ENCODE measurements at regions of chr3 and their contacts with region 1.

Region 1: GRCh38 chr3:33030802-33031201 is 66.1 kb downstream of the GLB1 start:
- DNase-seq: peak; percentile 80
- ATAC-seq: peak; percentile 97
- H3K4me3 Mint-ChIP-seq: peak overlapping the region; percentile 1
- H3K27ac Mint-ChIP-seq: peak overlapping the region; percentile 28
- H3K4me1 Mint-ChIP-seq: peaks cover 27% of the 10 kb centered on the region
- H3K27me3 Mint-ChIP-seq: peaks cover 3% of the 10 kb centered on the region

Region 2: DNA sequence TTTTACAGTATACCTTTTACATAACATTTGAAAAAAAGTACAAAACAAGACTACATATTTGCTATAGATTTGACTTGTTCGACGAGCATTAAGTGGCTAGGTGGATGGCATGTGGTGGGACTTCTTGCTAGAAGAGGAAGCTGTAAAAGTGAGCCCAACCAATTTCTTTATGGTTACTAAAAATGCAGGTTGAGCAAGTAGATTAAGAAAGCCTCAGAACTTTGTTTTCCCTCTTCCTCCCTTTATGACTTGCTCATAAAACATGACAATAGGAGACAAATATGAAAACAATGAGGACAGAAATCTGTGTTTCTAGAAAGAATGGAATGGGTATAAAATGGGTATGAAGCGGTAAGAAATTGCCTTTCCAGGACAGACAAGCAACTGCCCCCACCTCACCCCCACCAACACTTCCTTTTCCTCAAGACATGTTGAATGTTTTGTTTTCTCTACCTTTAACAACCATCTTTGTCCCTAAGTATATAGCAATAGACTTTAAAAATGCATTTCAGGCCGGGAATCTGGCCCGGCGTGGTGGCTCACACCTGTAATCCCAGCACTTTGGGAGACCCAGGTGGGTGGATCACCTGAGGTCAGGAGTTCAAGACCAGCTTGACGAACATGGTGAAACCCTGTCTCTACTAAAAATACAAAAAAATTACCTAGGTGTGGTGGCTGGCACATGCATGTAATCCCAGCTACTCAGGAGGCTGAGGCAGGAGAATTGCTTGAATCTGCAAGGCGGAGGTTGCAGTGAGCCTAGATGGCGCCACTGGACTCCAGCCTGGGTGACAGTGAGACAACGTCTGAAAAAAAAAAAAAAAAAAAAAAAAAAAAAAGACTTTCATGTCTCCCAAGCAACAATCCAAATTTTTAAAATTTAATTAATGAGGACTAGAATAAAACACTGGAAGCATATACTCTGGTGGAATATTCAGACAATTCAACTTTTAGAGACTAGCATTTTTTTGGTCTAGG is 129.1 kb before region 1 on chr3:
- CTCF ChIA-PET with region 1: no interaction called
- POLR2A ChIA-PET with region 1: no interaction called
- DNase-seq: peak; percentile 45
- ATAC-seq: no peak
- H3K4me3 Mint-ChIP-seq: no peak overlapping the region
- H3K27ac Mint-ChIP-seq: no peak overlapping the region
- H3K4me1 Mint-ChIP-seq: peaks cover 9% of the 10 kb centered on the region
- H3K27me3 Mint-ChIP-seq: peaks cover 25% of the 10 kb centered on the region

Region 3: GRCh38 chr3:32947789-32948238 is 83.0 kb before region 1 on chr3:
- CTCF ChIA-PET with region 1: interaction called, 98 read pairs
- POLR2A ChIA-PET with region 1: interaction called, 7 read pairs
- DNase-seq: peak; percentile 94
- ATAC-seq: peak; percentile 90
- H3K4me3 Mint-ChIP-seq: no peak overlapping the region
- H3K27ac Mint-ChIP-seq: no peak overlapping the region
- H3K4me1 Mint-ChIP-seq: peaks cover 35% of the 10 kb centered on the region
- H3K27me3 Mint-ChIP-seq: peaks cover 3% of the 10 kb centered on the region

Region 4: DNA sequence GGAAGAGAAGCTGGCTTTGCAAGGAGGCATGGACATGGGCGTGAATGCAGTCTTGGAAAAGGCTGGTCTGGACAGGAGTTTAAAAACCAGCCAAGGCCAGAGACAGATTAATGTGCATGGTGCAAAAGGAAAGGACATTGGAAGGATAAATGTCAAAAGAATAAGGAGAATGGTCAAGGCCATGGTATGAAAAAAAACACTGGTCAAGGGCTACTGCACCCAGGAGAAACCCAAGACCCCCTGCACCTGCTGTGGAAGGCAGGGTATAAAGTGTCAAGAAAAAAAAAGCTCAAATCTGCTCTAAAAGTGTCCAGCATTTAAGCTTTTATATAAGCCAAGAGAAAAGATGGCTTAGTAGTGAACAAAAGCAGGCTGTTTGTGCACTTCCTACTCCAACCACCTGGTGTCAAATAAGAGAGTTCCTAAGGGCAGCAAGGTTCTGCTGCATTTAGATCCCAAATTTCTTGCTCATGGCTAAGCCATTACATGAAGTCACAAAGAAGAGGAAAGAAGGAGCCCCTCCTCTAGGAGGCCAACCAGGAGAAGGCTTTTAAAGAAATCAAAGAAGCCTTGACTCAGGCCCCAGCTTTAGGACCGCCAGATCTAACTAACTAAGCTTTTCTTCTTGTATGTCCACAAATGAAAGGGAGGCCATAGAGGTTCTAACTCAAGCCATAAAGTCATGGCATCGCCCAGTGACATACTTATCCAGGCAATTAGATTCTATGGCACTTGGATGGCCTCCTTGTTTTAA is 62.5 kb before region 1 on chr3:
- CTCF ChIA-PET with region 1: interaction called, 10 read pairs
- POLR2A ChIA-PET with region 1: no interaction called
- DNase-seq: no peak
- ATAC-seq: no peak
- H3K4me3 Mint-ChIP-seq: no peak overlapping the region
- H3K27ac Mint-ChIP-seq: no peak overlapping the region
- H3K4me1 Mint-ChIP-seq: peaks cover 20% of the 10 kb centered on the region
- H3K27me3 Mint-ChIP-seq: peaks cover 2% of the 10 kb centered on the region

Region 5: GRCh38 chr3:33041909-33042308 is 11.1 kb after region 1 on chr3:
- CTCF ChIA-PET with region 1: interaction called, 83 read pairs
- POLR2A ChIA-PET with region 1: interaction called, 4 read pairs
- DNase-seq: no peak
- ATAC-seq: no peak
- H3K4me3 Mint-ChIP-seq: no peak overlapping the region
- H3K27ac Mint-ChIP-seq: no peak overlapping the region
- H3K4me1 Mint-ChIP-seq: peaks cover 48% of the 10 kb centered on the region
- H3K27me3 Mint-ChIP-seq: no peaks in the 10 kb centered on the region

Region 6: GRCh38 chr3:33063651-33064051 is 32.8 kb after region 1 on chr3:
- CTCF ChIA-PET with region 1: interaction called, 54 read pairs
- POLR2A ChIA-PET with region 1: interaction called, 3 read pairs
- DNase-seq: peak; percentile 78
- ATAC-seq: peak; percentile 85
- H3K4me3 Mint-ChIP-seq: peak overlapping the region; percentile 52
- H3K27ac Mint-ChIP-seq: peak overlapping the region; percentile 89
- H3K4me1 Mint-ChIP-seq: peaks cover 73% of the 10 kb centered on the region
- H3K27me3 Mint-ChIP-seq: no peaks in the 10 kb centered on the region